Esophagus muscularis mucosa (tissue), 4 donors: ENCODE measurements at regions of chr3 and their contacts with region 1.

Region 1: DNA sequence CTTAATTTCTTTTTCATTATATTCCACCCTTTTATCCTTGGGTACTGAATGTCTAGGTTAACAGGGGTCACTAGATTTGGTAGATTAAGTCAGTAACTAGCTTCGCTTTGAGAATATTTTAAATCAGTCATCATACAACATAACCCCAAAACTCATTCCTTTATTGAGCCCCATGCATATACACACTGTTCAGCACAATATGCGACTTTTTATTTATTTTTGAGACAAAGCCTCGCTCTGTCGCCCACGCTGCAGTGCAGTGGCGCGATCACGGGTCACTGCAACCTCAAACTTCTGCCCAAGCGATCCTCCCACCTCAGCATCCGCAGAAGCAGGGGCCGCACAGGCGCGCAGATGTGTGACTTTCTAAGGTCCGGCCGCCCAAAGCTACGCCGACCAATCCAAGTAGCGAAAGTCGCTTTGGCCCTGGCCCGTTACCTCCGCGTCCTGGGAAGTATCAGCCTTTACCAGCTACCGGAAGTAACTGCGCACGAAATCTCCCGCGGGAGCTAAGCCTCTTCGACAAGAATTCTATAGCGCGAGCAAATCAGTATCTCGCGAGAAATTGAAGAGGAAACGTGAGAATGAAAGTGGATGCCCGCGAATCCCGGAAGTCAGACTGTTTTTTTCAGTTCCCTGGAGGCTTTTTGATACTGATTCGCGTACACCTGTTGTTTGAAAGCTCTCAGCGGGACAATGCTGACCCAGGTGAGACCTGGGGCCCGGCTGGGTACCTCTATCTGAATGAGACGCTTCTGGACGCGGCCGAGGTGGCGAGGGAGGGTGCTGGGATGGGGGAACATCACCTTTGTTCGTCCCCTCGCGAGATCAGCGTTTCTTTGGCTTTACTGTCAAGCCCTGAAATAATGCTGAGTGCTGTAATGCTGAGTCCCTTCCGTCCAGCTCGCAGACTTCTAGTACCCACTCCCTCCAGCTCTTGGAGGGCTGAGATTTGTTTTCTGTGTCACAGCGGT is at the starts of genes DHFR2 and NSUN3:
- DNase-seq: peak; percentile 96
- H3K4me3 ChIP-seq: peak within 1 kb of the TSS; percentile 65 to 81 (median 68)
- H3K27ac ChIP-seq: peak within 1 kb of the TSS; percentile 89 to 92 (median 91)
- H3K4me1 ChIP-seq: peaks cover 16 to 32% (median 29%) of the 10 kb centered on the region in 4 donors
- H3K27me3 ChIP-seq: no peaks in the 10 kb centered on the region
- CTCF ChIP-seq: no peak
- EP300 ChIP-seq: no peak
- POLR2A ChIP-seq: no peak
- total RNA-seq, gene DHFR2: 3.3 to 5.9 (median 4.8) TPM
- total RNA-seq, gene NSUN3: 7.4 to 11.9 (median 8.0) TPM

Region 2: GRCh38 chr3:93906245-93906644 is 156.5 kb before region 1 on chr3:
- intact Hi-C with region 1: loop called (anchors 10 kb)
- DNase-seq: no peak
- H3K4me3 ChIP-seq: no peak overlapping the region
- H3K27ac ChIP-seq: no peak overlapping the region
- H3K4me1 ChIP-seq: peaks cover 0 to 29% (median 28%) of the 10 kb centered on the region in 4 donors
- H3K27me3 ChIP-seq: no peaks in the 10 kb centered on the region
- CTCF ChIP-seq: no peak
- EP300 ChIP-seq: no peak
- POLR2A ChIP-seq: no peak

Region 3: DNA sequence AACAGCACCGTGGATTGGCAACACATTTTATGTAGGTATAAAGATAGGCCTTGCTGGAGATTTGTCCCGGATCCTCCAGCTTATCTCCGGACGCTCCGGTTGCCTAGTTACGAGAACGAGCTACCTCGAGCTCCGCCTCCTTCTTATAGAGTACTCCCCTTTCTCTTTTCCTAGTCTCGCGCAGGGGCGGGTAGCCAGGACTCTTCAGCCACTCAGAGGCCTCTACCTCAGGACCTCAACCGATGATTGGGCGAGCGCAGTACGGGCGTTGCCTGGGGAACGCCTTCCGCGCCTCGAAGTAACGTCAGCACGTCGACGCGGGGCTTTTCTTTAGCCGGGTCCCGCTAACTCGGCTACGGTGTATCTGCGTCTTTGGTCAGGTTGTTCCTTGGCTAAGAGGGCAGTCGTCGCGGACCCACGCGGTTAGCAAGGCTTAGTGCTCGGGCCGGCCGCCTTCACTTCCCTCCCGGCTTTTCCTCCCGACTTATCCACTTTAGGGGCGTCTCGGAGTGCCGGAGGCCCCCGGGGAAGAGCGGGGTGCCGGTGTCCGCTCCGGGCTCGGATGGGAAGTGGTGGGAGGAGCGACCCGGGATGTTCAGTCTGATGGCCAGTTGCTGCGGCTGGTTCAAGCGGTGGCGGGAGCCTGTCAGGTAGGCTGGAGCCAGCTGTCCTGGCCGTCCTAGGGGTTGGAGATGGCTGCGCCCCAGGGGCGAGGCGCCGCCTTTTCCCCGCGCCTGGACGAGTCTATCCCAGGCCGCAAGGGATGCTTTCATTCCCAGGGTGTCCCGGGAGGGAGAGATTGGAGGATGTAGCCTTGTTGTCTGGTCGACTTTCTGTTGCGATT is 82.7 kb before region 1 on chr3 and contains the start of gene ARL13B:
- intact Hi-C with region 1: loop called (anchors 10 kb)
- DNase-seq: peak; percentile 99
- H3K4me3 ChIP-seq: peak within 1 kb of the TSS; percentile 67 to 91 (median 81)
- H3K27ac ChIP-seq: peak within 1 kb of the TSS; percentile 89 to 98 (median 93)
- H3K4me1 ChIP-seq: peaks cover 11 to 21% (median 19%) of the 10 kb centered on the region in 4 donors
- H3K27me3 ChIP-seq: no peaks in the 10 kb centered on the region
- CTCF ChIP-seq: no peak
- EP300 ChIP-seq: no peak
- POLR2A ChIP-seq: peak; percentile 66
- total RNA-seq, gene ARL13B: 11.8 to 17.0 (median 14.6) TPM

Region 4: GRCh38 chr3:94349310-94349878 is 286.7 kb after region 1 on chr3:
- intact Hi-C with region 1: no loop called
- DNase-seq: no peak
- H3K4me3 ChIP-seq: no peak overlapping the region
- H3K27ac ChIP-seq: no peak overlapping the region
- H3K4me1 ChIP-seq: peaks cover 0 to 7% (median 0%) of the 10 kb centered on the region in 4 donors
- H3K27me3 ChIP-seq: no peaks in the 10 kb centered on the region
- CTCF ChIP-seq: no peak
- EP300 ChIP-seq: no peak
- POLR2A ChIP-seq: no peak